Colonic mucosa (tissue), 4 donors: ENCODE measurements at regions of chr15 and their contacts with region 1.

Region 1: GRCh38 chr15:92714477-92715401 is 59.2 kb upstream of the FAM174B start:
- DNase-seq: peak; percentile 81
- H3K4me3 ChIP-seq: peak overlapping the region; percentile 40
- H3K27ac ChIP-seq: peak overlapping the region; percentile 3
- H3K4me1 ChIP-seq: no peaks in the 10 kb centered on the region
- H3K27me3 ChIP-seq: no peaks in the 10 kb centered on the region
- CTCF ChIP-seq: peak; percentile 78

Region 2: DNA sequence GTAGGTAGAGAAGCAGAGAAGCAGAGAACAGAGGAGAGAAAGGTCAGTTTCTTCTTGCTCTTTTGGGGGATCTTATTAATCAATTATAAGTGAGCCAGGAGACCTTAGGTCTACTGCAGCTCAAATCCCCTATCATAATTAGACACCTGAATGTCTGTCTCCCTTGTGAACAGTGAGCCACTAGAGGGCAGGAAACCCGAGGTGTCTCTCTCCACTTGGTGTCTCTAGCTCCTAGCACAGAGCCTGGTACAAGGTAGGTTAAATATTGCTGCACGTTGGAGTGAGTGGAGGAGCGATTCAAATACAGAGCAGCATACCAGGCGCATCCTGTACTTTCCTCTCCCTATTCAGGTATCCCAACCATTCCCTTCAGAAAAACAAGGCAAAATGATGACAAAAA is 323.1 kb before region 1 on chr15:
- intact Hi-C with region 1: loop called (anchors 10 kb)
- DNase-seq: no peak
- H3K4me3 ChIP-seq: no peak overlapping the region
- H3K27ac ChIP-seq: no peak overlapping the region
- H3K4me1 ChIP-seq: no peaks in the 10 kb centered on the region
- H3K27me3 ChIP-seq: peaks cover 56% of the 10 kb centered on the region
- CTCF ChIP-seq: peak; percentile 28

Region 3: DNA sequence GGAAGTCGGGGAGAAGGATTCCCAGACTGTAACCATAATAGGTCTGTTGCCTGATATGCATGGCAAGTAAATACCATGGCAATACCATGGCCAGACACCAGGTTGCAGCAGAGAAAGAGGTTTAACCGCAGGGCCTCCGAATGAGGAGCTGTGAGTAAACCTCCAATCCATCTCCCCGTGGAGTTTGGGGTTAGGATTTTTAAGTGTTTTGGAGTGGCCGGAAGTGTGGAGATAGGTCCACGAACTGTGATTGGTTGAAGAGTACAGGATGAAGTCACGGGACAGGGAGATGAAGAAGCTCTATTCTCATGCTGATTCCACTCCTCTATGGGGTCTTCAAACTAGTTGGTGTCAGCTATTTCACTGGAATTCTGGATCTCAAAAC is 193.1 kb before region 1 on chr15:
- intact Hi-C with region 1: loop called (anchors 2 kb)
- DNase-seq: peak; percentile 75
- H3K4me3 ChIP-seq: no peak overlapping the region
- H3K27ac ChIP-seq: no peak overlapping the region
- H3K4me1 ChIP-seq: no peaks in the 10 kb centered on the region
- H3K27me3 ChIP-seq: no peaks in the 10 kb centered on the region
- CTCF ChIP-seq: peak; percentile 62

Region 4: GRCh38 chr15:92571824-92572223 is 142.9 kb before region 1 on chr15:
- intact Hi-C with region 1: no loop called
- DNase-seq: no peak
- H3K4me3 ChIP-seq: no peak overlapping the region
- H3K27ac ChIP-seq: no peak overlapping the region
- H3K4me1 ChIP-seq: no peaks in the 10 kb centered on the region
- H3K27me3 ChIP-seq: no peaks in the 10 kb centered on the region
- CTCF ChIP-seq: no peak